Naive thymus-derived CD8-positive, alpha-beta T cell (primary cell): ENCODE measurements at regions of chr10 and their contacts with region 1.

Region 1: DNA sequence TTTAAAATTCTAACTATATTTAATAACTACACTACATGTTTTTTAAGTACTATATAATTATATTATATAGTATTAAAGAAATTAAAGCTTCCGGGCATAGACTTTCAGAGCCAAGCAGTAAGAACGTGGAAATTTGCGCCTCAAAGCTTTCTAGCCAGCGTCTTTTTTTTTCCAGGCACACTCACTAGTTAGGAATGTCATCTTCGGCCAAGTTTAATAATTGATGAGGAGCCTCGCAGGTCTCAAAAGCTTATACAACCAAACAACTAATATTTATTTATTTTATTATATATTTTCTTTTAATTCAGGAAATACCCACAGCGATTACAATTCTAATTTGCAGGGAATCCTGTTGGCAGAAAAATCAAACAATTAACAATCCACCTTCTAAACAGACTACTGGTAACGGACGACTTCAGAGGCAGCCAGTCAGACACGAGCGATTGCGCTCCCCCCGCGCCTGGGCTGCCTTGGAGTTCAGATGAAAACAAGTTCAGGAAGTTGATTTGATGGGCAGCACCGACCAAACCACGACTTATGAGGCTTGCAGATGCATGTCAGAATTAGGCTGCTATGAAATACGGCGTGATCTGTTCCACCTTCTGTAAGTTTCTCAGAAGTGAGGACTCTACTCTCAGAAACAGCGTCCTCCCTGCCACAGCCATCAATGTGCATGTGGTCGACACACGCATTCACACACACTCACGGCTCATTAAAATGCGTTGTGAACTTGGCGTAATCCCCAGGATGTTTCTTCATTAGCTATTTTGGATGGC is 431.8 kb upstream of the MGMT start:
- DNase-seq: peak; percentile 45 to 86 (median 66)
- ATAC-seq: peak; percentile 71 to 81
- H3K4me3 Mint-ChIP-seq: peak overlapping the region; percentile 69 to 97 (median 89)
- H3K27ac Mint-ChIP-seq: peak overlapping the region; percentile 80 to 99 (median 98)
- H3K4me1 Mint-ChIP-seq: peaks cover 36 to 79% (median 58%) of the 10 kb centered on the region in 4 donors
- H3K27me3 Mint-ChIP-seq: peaks cover 0 to 29% (median 1%) of the 10 kb centered on the region in 5 donors

Region 2: DNA sequence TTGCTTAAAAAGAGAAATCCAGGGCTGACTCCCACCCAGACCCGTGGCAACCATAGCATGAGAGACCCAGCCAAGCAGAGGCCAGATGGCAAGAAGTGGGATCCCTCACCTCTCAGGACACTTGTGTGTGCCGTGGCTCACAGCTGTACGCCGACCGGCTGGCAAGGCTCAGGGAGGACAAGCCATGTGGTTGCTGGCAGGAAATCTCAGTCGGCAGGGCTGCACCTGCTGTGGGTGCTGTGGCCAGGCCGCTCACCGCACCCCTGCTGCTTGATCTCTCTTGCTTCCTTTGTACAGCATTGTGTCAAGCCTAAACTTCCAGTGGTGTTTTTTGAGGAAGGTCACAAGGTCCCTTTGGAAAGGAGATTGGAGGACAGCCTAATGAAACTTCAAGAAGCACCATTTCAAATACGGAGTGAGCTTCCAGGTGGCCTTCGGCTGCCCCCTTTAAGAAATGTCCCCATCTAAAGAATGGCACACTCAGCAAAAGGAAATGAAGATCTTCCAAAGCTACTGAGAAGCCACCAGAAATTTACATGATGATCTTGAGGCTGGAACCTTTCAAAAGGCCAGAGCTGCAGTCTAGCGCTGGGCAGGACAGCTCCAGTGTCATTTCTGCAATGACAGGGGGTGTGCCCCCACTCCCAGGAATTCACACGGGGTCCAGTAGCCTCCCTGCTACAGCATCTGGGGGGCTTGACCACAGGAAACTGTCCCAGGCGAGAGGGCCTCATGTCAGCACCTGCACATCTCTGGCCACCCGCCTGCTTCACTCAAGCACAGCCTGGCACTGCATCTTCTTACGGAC is 22.8 kb after region 1 on chr10:
- POLR2A ChIA-PET with region 1: interaction called, 59 read pairs
- DNase-seq: peak; percentile 24 to 81 (median 60)
- ATAC-seq: peak; percentile 98
- H3K4me3 Mint-ChIP-seq: peak overlapping the region; percentile 57 to 83 (median 76)
- H3K27ac Mint-ChIP-seq: peak overlapping the region in 9 of 10 donors; percentile 61 to 82 (median 77)
- H3K4me1 Mint-ChIP-seq: peaks cover 29 to 63% (median 38%) of the 10 kb centered on the region in 4 donors
- H3K27me3 Mint-ChIP-seq: peaks cover 0 to 4% (median 0%) of the 10 kb centered on the region in 5 donors

Region 3: DNA sequence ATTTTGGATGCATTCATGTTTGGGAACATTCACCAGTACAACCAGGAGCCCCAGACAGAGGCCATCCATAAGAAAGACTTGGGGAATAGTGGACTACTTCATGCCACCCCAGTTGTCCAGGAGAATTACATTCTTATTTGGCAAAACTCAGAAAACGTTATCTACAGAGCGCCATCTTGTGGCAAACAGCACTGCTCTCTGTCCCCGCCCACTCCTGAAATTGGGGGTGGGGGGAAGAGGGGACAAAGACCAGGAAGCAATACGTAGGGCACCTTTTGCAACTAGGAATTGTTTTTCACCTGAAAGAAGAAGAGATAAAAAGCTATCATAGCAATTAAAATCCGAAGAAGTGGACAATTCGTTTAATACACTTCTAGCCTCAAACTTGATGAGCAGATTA is 297.2 kb after region 1 on chr10:
- POLR2A ChIA-PET with region 1: interaction called, 12 read pairs
- DNase-seq: peak in 6 of 10 donors; percentile 7 to 41 (median 26)
- ATAC-seq: no peak
- H3K4me3 Mint-ChIP-seq: peak overlapping the region in 1 of 10 donors; percentile 37
- H3K27ac Mint-ChIP-seq: peak overlapping the region in 1 of 10 donors; percentile 7
- H3K4me1 Mint-ChIP-seq: peaks cover 0 to 8% (median 5%) of the 10 kb centered on the region in 4 donors
- H3K27me3 Mint-ChIP-seq: peaks cover 2 to 9% (median 4%) of the 10 kb centered on the region in 5 donors

Region 4: GRCh38 chr10:129466703-129467358 is 431.6 kb after region 1 on chr10 and contains the start of gene MGMT:
- POLR2A ChIA-PET with region 1: interaction called, 14 read pairs
- DNase-seq: peak; percentile 88 to 100 (median 96)
- ATAC-seq: peak; percentile 95 to 97
- H3K4me3 Mint-ChIP-seq: peak within 1 kb of the TSS; percentile 78 to 88 (median 86)
- H3K27ac Mint-ChIP-seq: peak within 1 kb of the TSS; percentile 28 to 93 (median 90)
- H3K4me1 Mint-ChIP-seq: peaks cover 7 to 32% (median 14%) of the 10 kb centered on the region in 4 donors
- H3K27me3 Mint-ChIP-seq: no peaks in the 10 kb centered on the region
- polyA plus RNA-seq, gene MGMT: 32.2 to 41.7 (median 37.6) TPM